Activated CD4-positive, alpha-beta T cell treated with anti-CD3 and anti-CD28 coated beads for 36 hours (primary cell): ENCODE measurements at regions of chr10 and their contacts with region 1.

Region 1: GRCh38 chr10:24168258-24169170 is 40.4 kb upstream of the KIAA1217 start:
- DNase-seq: no peak
- ATAC-seq: no peak
- H3K4me3 Mint-ChIP-seq: no peak overlapping the region
- H3K27ac Mint-ChIP-seq: no peak overlapping the region
- H3K4me1 Mint-ChIP-seq: no peaks in the 10 kb centered on the region
- H3K27me3 Mint-ChIP-seq: no peaks in the 10 kb centered on the region

Region 2: DNA sequence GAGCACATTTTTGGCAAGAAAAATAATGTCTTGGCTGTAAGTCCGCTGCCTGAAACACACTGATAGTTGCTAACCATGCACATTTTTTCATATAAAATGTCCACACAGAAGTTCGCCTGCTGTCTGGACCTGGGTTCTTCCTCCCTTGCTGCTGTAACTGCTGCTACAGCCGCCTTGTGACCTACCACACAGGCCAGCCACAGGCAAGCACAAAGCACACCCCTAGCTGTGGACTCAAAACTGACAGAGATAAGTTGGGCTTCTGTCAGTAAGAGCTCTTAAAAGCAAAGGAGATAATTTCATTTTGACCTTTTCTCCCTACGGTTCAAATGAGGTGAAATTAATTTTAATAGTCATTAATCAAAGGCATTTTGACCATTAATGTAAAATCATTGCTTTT is 374.9 kb before region 1 on chr10:
- CTCF ChIA-PET with region 1: no interaction called
- POLR2A ChIA-PET with region 1: no interaction called
- intact Hi-C with region 1: no loop called
- DNase-seq: no peak
- ATAC-seq: no peak
- H3K4me3 Mint-ChIP-seq: no peak overlapping the region
- H3K27ac Mint-ChIP-seq: no peak overlapping the region
- H3K4me1 Mint-ChIP-seq: no peaks in the 10 kb centered on the region
- H3K27me3 Mint-ChIP-seq: no peaks in the 10 kb centered on the region

Region 3: GRCh38 chr10:24150853-24151252 is 17.7 kb before region 1 on chr10:
- CTCF ChIA-PET with region 1: no interaction called
- POLR2A ChIA-PET with region 1: no interaction called
- intact Hi-C with region 1: loop called in 1 of 2 experiments (anchors 2 kb)
- DNase-seq: no peak
- ATAC-seq: no peak
- H3K4me3 Mint-ChIP-seq: no peak overlapping the region
- H3K27ac Mint-ChIP-seq: no peak overlapping the region
- H3K4me1 Mint-ChIP-seq: no peaks in the 10 kb centered on the region
- H3K27me3 Mint-ChIP-seq: no peaks in the 10 kb centered on the region

Region 4: GRCh38 chr10:24331457-24331856 is 162.9 kb after region 1 on chr10:
- CTCF ChIA-PET with region 1: no interaction called
- POLR2A ChIA-PET with region 1: no interaction called
- intact Hi-C with region 1: no loop called
- DNase-seq: no peak
- ATAC-seq: no peak
- H3K4me3 Mint-ChIP-seq: no peak overlapping the region
- H3K27ac Mint-ChIP-seq: no peak overlapping the region
- H3K4me1 Mint-ChIP-seq: no peaks in the 10 kb centered on the region
- H3K27me3 Mint-ChIP-seq: peaks cover 6% of the 10 kb centered on the region